HEK293 (cell line): ENCODE measurements at regions of chr14 and their contacts with region 1.

Region 1: GRCh38 chr14:99961826-99962666 is 103.2 kb upstream of the EVL start:
- H3K4me3 ChIP-seq: no peak overlapping the region
- H3K27ac ChIP-seq: no peak overlapping the region
- H3K4me1 ChIP-seq: no peaks in the 10 kb centered on the region
- CTCF ChIP-seq: no peak

Region 2: GRCh38 chr14:99946652-99947489 is 15.2 kb before region 1 on chr14:
- CTCF ChIA-PET with region 1: interaction called, 16 read pairs
- POLR2A ChIA-PET with region 1: no interaction called
- H3K4me3 ChIP-seq: no peak overlapping the region
- H3K27ac ChIP-seq: no peak overlapping the region
- H3K4me1 ChIP-seq: peaks cover 2% of the 10 kb centered on the region; the same call in 1 of the 2 replicates
- CTCF ChIP-seq: peak; percentile 62

Region 3: GRCh38 chr14:100239840-100240724 is 278.0 kb after region 1 on chr14:
- CTCF ChIA-PET with region 1: no interaction called
- POLR2A ChIA-PET with region 1: no interaction called
- H3K4me3 ChIP-seq: peak overlapping the region; percentile 100
- H3K27ac ChIP-seq: peak overlapping the region; percentile 98
- H3K4me1 ChIP-seq: peaks cover 6% of the 10 kb centered on the region; the same call in 1 of the 2 replicates
- CTCF ChIP-seq: peak; percentile 59